Body of pancreas (tissue), 4 donors: ENCODE measurements at regions of chr14 and their contacts with region 1.

Region 1: GRCh38 chr14:61726778-61727658 is 31.7 kb downstream of the HIF1A start:
- DNase-seq: no peak
- ATAC-seq: no peak
- H3K4me3 ChIP-seq: no peak overlapping the region
- H3K27ac ChIP-seq: no peak overlapping the region
- H3K4me1 ChIP-seq: no peaks in the 10 kb centered on the region
- H3K27me3 ChIP-seq: no peaks in the 10 kb centered on the region
- CTCF ChIP-seq: no peak
- POLR2A ChIP-seq: no peak

Region 2: GRCh38 chr14:60637479-60638315 is 1089.3 kb before region 1 on chr14:
- intact Hi-C with region 1: no loop called
- DNase-seq: no peak
- ATAC-seq: peak; percentile 47
- H3K4me3 ChIP-seq: no peak overlapping the region
- H3K27ac ChIP-seq: no peak overlapping the region
- H3K4me1 ChIP-seq: peaks cover 25% of the 10 kb centered on the region
- H3K27me3 ChIP-seq: peaks cover 5 to 47% of the 10 kb centered on the region in 2 donors
- CTCF ChIP-seq: no peak
- POLR2A ChIP-seq: no peak

Region 3: GRCh38 chr14:61466249-61466904 is 260.6 kb before region 1 on chr14:
- intact Hi-C with region 1: loop called (anchors 5 kb)
- DNase-seq: peak in 2 of 4 donors; percentile 13 to 54
- ATAC-seq: peak; percentile 38
- H3K4me3 ChIP-seq: no peak overlapping the region
- H3K27ac ChIP-seq: no peak overlapping the region
- H3K4me1 ChIP-seq: peaks cover 6% of the 10 kb centered on the region
- H3K27me3 ChIP-seq: no peaks in the 10 kb centered on the region
- CTCF ChIP-seq: no peak
- POLR2A ChIP-seq: no peak

Region 4: GRCh38 chr14:61695695-61696527 is 31.1 kb before region 1 on chr14:
- intact Hi-C with region 1: no loop called
- DNase-seq: peak; percentile 46 to 67 (median 58)
- ATAC-seq: peak; percentile 10
- H3K4me3 ChIP-seq: peak overlapping the region; percentile 84 to 94
- H3K27ac ChIP-seq: peak overlapping the region; percentile 92 to 99 (median 96)
- H3K4me1 ChIP-seq: peaks cover 39% of the 10 kb centered on the region
- H3K27me3 ChIP-seq: no peaks in the 10 kb centered on the region
- CTCF ChIP-seq: no peak
- POLR2A ChIP-seq: no peak